Activated CD4-positive, alpha-beta memory T cell treated with anti-CD3 and anti-CD28 coated beads for 36 hours (primary cell): ENCODE measurements at regions of chr4 and their contacts with region 1.

Region 1: DNA sequence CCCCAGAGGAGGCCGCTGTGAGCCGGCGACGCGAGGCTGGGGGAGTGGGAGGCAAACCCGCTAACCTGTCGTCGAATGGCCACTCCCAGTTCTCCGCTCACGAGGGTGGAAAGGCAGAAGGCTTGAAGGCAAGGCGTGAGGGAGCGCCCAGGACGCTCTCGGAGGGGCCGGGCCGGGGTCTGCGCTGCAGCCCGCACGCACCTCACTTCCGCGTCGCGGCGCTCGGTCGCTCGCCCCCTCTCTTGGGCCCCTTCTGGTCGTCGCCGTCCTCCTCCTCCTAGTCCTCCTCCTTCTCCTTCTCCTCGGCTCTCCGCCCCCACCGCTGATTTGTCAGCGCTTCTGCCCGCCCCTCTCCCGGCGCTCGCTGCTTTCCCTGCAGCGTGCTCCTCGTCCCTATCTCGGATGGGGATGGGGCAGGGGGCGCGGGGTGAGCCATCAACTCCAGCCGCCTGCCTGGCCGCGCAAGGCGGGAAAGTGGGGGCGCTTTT is at the start of gene SNCA:
- DNase-seq: peak; percentile 71
- H3K4me3 Mint-ChIP-seq: peak within 1 kb of the TSS; percentile 74
- H3K27ac Mint-ChIP-seq: no peak within 1 kb of the TSS
- H3K4me1 Mint-ChIP-seq: peaks cover 22% of the 10 kb centered on the region
- H3K27me3 Mint-ChIP-seq: peaks cover 46% of the 10 kb centered on the region
- total RNA-seq, gene SNCA: 2.0 to 2.5 TPM

Region 2: GRCh38 chr4:89029591-89029990 is 807.4 kb before region 1 on chr4:
- CTCF ChIA-PET with region 1: no interaction called
- POLR2A ChIA-PET with region 1: no interaction called
- intact Hi-C with region 1: no loop called
- DNase-seq: no peak
- H3K4me3 Mint-ChIP-seq: no peak overlapping the region
- H3K27ac Mint-ChIP-seq: no peak overlapping the region
- H3K4me1 Mint-ChIP-seq: peaks cover 12% of the 10 kb centered on the region
- H3K27me3 Mint-ChIP-seq: no peaks in the 10 kb centered on the region

Region 3: DNA sequence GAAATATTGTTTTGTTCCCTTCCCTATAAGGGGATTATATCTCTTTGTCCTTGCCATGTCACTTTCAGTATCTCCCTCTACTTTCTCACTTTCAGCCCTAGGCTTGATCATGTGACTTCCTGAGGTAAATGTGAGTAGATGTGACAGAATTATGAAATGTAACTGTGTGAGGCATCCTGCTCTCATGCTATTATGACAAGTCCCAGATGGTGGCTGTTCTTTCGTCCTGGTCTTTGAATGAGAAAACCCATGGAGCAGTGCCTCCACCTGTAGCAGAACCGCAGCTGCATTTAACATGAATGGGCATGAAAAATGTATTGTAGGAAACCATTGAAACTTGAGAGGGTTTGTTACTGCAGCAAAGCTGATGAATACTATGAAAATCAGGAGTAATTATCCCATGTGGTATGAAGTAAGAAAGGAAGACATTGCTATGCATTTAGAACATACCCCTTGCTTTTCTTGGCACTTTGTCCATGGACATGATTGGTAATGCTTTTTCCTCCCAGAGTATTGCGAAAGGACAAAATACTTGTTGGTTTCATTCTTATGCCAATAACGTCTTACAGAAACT is 327.1 kb before region 1 on chr4:
- CTCF ChIA-PET with region 1: no interaction called
- POLR2A ChIA-PET with region 1: no interaction called
- intact Hi-C with region 1: loop called (anchors 10 kb)
- DNase-seq: peak; percentile 32
- H3K4me3 Mint-ChIP-seq: no peak overlapping the region
- H3K27ac Mint-ChIP-seq: peak overlapping the region; percentile 15
- H3K4me1 Mint-ChIP-seq: peaks cover 16% of the 10 kb centered on the region
- H3K27me3 Mint-ChIP-seq: peaks cover 8% of the 10 kb centered on the region

Region 4: GRCh38 chr4:89868999-89869589 is 32.2 kb after region 1 on chr4:
- CTCF ChIA-PET with region 1: no interaction called
- POLR2A ChIA-PET with region 1: no interaction called
- intact Hi-C with region 1: loop called (anchors 2 kb)
- DNase-seq: no peak
- H3K4me3 Mint-ChIP-seq: no peak overlapping the region
- H3K27ac Mint-ChIP-seq: no peak overlapping the region
- H3K4me1 Mint-ChIP-seq: no peaks in the 10 kb centered on the region
- H3K27me3 Mint-ChIP-seq: no peaks in the 10 kb centered on the region

Region 5: GRCh38 chr4:89894649-89895550 is 58.0 kb after region 1 on chr4 and contains the start of gene MMRN1:
- CTCF ChIA-PET with region 1: no interaction called
- POLR2A ChIA-PET with region 1: no interaction called
- intact Hi-C with region 1: loop called (anchors 5 kb)
- DNase-seq: peak; percentile 15
- H3K4me3 Mint-ChIP-seq: peak within 1 kb of the TSS; percentile 52
- H3K27ac Mint-ChIP-seq: peak within 1 kb of the TSS; percentile 19
- H3K4me1 Mint-ChIP-seq: peaks cover 15% of the 10 kb centered on the region
- H3K27me3 Mint-ChIP-seq: no peaks in the 10 kb centered on the region
- total RNA-seq, gene MMRN1: 0.10 TPM in 1 of 2 experiments, not detected in the other